Activated naive CD4-positive, alpha-beta T cell treated with anti-CD3 and anti-CD28 coated beads, Interleukin-2, amount 10 ng/mL, durations not matched to agents 7 days and 5 days (primary cell): ENCODE measurements at regions of chr16 and their contacts with region 1.

Region 1: GRCh38 chr16:12095275-12096156 is 119.0 kb downstream of the SNX29 start:
- DNase-seq: peak; percentile 75
- H3K4me3 Mint-ChIP-seq: no peak overlapping the region
- H3K27ac Mint-ChIP-seq: no peak overlapping the region
- H3K4me1 Mint-ChIP-seq: peaks cover 8% of the 10 kb centered on the region
- H3K27me3 Mint-ChIP-seq: no peaks in the 10 kb centered on the region

Region 2: DNA sequence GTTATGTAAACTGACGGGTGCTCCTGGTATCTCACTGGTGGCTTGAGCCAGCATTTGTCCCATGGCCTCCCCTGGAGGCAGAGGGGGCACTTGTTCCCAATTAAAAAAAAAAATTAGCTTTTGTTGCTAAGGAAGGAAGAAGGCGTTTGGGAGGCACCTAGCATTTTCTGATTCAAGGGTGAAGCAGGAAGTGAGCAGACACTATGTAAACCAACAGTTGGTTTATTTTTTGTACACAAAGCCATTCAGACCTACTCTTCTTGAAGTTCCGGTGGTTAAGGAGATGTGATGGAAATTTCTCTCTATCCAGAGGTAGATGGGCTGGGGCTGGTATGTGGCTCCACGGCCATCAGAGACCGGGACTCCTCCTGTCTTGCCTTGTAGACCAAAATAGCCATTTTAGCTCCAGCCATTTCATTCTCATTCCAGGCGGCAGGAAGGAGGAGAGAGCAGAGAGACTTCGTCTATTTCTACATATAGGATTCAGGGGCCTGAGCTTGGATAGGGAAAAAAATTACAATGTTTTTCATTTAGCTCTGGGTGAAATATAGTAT is 16.0 kb before region 1 on chr16:
- CTCF ChIA-PET with region 1: interaction called, 20 read pairs
- DNase-seq: peak; percentile 41
- H3K4me3 Mint-ChIP-seq: peak overlapping the region; percentile 58
- H3K27ac Mint-ChIP-seq: peak overlapping the region; percentile 96
- H3K4me1 Mint-ChIP-seq: peaks cover 88% of the 10 kb centered on the region
- H3K27me3 Mint-ChIP-seq: no peaks in the 10 kb centered on the region

Region 3: GRCh38 chr16:12340151-12340733 is 244.7 kb after region 1 on chr16:
- CTCF ChIA-PET with region 1: interaction called, 14 read pairs
- DNase-seq: peak; percentile 51
- H3K4me3 Mint-ChIP-seq: no peak overlapping the region
- H3K27ac Mint-ChIP-seq: no peak overlapping the region
- H3K4me1 Mint-ChIP-seq: no peaks in the 10 kb centered on the region
- H3K27me3 Mint-ChIP-seq: no peaks in the 10 kb centered on the region

Region 4: GRCh38 chr16:12771341-12771798 is 675.9 kb after region 1 on chr16:
- CTCF ChIA-PET with region 1: no interaction called
- DNase-seq: no peak
- H3K4me3 Mint-ChIP-seq: no peak overlapping the region
- H3K27ac Mint-ChIP-seq: no peak overlapping the region
- H3K4me1 Mint-ChIP-seq: peaks cover 31% of the 10 kb centered on the region
- H3K27me3 Mint-ChIP-seq: no peaks in the 10 kb centered on the region

Region 5: DNA sequence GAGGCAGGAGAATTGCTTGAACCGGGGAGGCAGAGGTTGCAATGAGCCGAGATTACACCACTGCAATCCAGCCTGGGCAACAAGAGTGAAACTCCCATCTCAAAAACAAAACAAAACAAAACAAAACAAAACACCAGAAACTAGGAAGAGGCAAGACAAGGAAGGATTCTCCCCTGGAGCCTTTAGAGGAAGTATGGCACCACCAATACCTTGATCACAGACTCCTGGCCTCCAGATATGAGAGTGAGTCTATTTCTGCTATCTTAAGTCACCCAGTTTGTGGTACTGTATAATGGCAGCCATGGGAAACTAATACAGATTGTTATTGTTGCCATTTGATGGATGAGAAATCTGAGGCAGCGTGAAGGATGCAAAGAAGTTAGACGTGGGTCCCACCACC is 722.8 kb after region 1 on chr16:
- CTCF ChIA-PET with region 1: interaction called, 10 read pairs
- DNase-seq: no peak
- H3K4me3 Mint-ChIP-seq: no peak overlapping the region
- H3K27ac Mint-ChIP-seq: no peak overlapping the region
- H3K4me1 Mint-ChIP-seq: peaks cover 18% of the 10 kb centered on the region
- H3K27me3 Mint-ChIP-seq: peaks cover 9% of the 10 kb centered on the region

Region 6: GRCh38 chr16:13453938-13454553 is 1358.5 kb after region 1 on chr16:
- CTCF ChIA-PET with region 1: interaction called, 22 read pairs
- DNase-seq: peak; percentile 34
- H3K4me3 Mint-ChIP-seq: no peak overlapping the region
- H3K27ac Mint-ChIP-seq: no peak overlapping the region
- H3K4me1 Mint-ChIP-seq: no peaks in the 10 kb centered on the region
- H3K27me3 Mint-ChIP-seq: no peaks in the 10 kb centered on the region